AG04450 (cell line): ENCODE measurements at regions of chr22 and their contacts with region 1.

Region 1: DNA sequence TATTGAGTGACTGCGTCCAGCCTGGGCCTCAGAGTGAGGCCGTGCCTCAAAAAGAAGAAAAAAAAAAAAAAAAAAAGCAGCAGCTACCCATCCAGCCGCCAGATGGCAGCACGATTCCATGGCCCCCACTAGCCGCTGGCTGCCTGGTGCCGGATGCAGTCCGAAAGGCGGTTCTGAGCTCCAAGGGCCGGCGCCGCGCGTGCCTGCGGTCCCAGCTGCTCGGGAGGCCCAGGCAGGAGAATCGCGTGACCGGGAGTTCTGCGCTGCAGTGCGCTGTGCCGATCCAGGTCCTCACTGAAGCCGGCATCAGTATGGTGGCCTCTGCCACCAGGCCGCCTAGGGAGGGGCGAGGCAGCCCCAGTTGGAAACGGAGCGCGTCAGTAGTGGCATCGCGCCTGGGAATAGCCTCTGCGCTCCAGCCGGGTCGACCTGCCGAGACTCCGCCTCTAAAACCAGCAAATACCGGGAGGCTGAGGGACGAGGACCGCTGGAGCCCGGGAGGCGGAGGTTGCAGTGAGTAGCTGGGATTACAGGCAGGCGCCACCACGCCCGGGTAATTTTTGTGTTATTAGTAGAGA is 19.3 kb downstream of the SCARF2 start:
- DNase-seq: peak; percentile 65
- H3K4me3 ChIP-seq: peak overlapping the region; percentile 56
- H3K27ac ChIP-seq: peak overlapping the region; percentile 57
- H3K27me3 ChIP-seq: no peaks in the 10 kb centered on the region
- CTCF ChIP-seq: peak; percentile 89

Region 2: DNA sequence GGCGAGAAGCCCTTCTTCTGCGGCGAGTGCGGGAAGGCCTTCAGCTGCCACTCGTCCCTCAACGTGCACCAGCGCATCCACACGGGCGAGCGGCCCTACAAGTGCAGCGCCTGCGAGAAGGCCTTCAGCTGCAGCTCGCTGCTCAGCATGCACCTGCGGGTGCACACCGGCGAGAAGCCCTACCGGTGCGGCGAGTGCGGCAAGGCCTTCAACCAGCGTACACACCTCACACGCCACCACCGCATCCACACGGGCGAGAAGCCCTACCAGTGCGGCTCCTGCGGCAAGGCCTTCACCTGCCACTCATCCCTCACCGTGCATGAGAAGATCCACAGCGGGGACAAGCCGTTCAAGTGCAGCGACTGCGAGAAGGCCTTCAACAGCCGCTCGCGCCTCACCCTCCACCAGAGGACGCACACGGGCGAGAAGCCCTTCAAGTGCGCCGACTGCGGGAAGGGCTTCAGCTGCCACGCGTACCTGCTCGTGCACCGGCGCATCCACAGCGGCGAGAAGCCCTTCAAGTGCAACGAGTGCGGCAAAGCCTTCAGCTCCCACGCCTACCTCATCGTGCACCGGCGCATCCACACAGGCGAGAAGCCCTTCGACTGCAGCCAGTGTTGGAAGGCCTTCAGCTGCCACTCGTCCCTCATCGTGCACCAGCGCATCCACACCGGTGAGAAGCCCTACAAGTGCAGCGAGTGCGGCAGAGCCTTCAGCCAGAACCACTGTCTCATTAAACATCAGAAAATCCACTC is 12.2 kb before region 1 on chr22:
- CTCF ChIA-PET with region 1: interaction called, 23 read pairs
- POLR2A ChIA-PET with region 1: no interaction called
- DNase-seq: no peak
- H3K4me3 ChIP-seq: no peak overlapping the region
- H3K27ac ChIP-seq: no peak overlapping the region
- H3K27me3 ChIP-seq: no peaks in the 10 kb centered on the region
- CTCF ChIP-seq: no peak

Region 3: GRCh38 chr22:20436768-20437612 is 18.7 kb after region 1 on chr22:
- CTCF ChIA-PET with region 1: interaction called, 19 read pairs
- POLR2A ChIA-PET with region 1: interaction called, 5 read pairs
- DNase-seq: no peak
- H3K4me3 ChIP-seq: peak overlapping the region; percentile 75
- H3K27ac ChIP-seq: peak overlapping the region; percentile 65
- H3K27me3 ChIP-seq: no peaks in the 10 kb centered on the region
- CTCF ChIP-seq: no peak

Region 4: DNA sequence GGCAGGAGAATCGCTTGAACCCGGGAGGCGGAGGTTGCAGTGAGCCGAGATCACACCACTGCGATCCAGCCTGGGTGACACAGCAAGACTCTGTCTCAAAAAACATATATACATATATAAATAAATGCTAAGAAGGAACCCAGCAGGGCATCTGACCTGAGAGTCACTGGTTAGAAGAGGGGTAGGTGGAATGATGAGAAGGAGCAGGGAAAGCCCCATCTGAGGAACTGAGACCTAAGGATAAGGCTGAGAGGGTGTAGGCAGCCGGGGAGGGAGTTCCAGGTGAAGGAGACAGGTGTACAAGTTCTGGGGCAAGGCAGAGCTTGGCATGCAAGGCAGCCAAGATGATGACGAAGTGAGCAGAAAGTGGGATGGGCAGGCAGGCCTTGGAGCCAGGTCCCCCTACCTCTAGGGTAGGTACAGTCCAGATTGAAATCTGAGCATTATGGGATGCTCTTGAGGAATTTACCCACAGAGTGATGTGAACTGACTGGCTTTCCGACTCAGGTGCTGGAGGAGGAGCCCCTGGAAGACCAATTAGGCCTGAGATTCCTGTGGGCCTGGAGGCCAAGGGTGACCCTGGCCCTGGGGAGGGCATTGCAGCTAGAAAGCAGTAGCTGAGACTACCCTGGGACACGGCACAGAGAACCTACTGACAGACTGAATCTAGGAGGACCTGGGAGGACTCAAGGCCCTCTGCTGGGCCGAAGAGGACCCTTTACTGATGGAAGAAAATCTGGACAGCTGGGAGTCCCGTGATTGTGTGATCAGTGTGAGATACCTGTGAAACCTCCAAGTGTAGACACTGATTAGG is 54.5 kb after region 1 on chr22:
- CTCF ChIA-PET with region 1: interaction called, 10 read pairs
- POLR2A ChIA-PET with region 1: no interaction called
- DNase-seq: no peak
- H3K4me3 ChIP-seq: no peak overlapping the region
- H3K27ac ChIP-seq: no peak overlapping the region
- H3K27me3 ChIP-seq: no peaks in the 10 kb centered on the region
- CTCF ChIP-seq: no peak

Region 5: DNA sequence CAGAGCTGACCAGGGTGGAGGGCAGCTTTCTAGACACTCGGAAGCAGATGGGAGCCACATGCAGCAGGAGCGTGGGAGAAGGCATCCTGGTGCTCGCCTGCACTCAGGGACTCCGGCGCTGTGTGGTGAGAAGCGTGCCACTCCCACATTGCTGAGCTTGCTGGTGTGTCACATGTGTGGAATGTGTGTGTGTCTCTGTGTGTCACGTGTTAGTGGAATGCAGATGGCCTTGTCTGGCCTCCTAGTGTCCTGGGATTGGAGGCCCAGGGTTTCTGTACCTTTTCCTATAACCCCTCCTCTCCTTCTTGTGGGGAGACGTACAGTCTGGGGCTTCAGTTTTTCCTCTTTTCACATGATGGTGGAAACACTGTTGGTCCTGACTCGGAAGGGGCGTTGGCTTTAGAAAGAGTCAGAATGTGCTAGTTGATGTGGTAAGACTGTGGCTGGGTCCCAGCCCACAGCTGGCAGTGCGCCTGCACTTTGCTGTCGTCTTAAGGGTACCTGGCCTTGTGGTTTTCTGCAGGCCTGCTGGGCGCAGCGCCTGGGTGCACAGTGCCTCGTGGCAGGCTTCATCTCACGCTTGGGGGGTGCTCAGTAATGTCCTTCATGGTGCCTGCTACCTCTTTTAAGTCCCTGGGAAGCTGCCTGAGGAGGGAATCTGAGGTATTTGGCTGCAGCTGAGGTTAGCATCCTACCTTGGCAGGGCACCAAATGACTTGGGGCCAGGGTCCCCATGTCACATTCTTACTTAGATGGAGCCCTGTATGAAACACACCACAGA is 150.9 kb after region 1 on chr22:
- CTCF ChIA-PET with region 1: interaction called, 16 read pairs
- POLR2A ChIA-PET with region 1: no interaction called
- DNase-seq: peak; percentile 94
- H3K4me3 ChIP-seq: no peak overlapping the region
- H3K27ac ChIP-seq: peak overlapping the region; percentile 97
- H3K27me3 ChIP-seq: no peaks in the 10 kb centered on the region
- CTCF ChIP-seq: no peak